ENCODE measurements at regions of chr6 and their contacts with region 1.

Region 1: DNA sequence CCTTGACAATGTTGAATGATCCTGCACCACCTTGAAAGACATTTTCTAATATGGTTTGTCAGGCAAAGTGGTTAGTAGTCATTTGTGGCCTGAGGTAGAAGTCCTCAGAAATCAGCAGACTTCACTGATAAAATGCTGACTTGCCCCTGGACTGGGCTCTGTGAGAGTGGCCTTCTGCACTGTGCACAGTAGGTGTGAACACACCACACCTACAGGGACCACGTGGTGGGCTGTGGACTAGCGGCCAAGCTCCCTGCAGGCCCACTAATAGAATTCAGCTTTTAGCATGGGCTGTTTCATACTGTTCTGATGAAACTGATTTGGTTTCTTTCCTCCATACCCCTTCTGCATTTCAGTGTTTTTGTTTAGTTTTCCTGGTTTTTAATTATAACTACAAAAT is 7.3 kb downstream of the BPHL start:
- DNase-seq: no peak
- H3K4me3 ChIP-seq: no peak overlapping the region
- H3K27ac ChIP-seq: no peak overlapping the region
- H3K4me1 ChIP-seq: no peaks in the 10 kb centered on the region
- H3K27me3 ChIP-seq: no peaks in the 10 kb centered on the region
- CTCF ChIP-seq: no peak
- POLR2A ChIP-seq: no peak

Region 2: GRCh38 chr6:3251462-3252314 is 125.9 kb after region 1 on chr6:
- intact Hi-C with region 1: loop called (anchors 5 kb)
- DNase-seq: peak; percentile 77 to 84
- H3K4me3 ChIP-seq: no peak overlapping the region
- H3K27ac ChIP-seq: no peak overlapping the region
- H3K4me1 ChIP-seq: peaks cover 0 to 7% of the 10 kb centered on the region in 2 donors
- H3K27me3 ChIP-seq: no peaks in the 10 kb centered on the region
- CTCF ChIP-seq: peak; percentile 90 to 98 (median 96)
- POLR2A ChIP-seq: no peak

Region 3: GRCh38 chr6:3294921-3295871 is 169.4 kb after region 1 on chr6:
- intact Hi-C with region 1: no loop called
- DNase-seq: peak in 1 of 2 donors; percentile 51
- H3K4me3 ChIP-seq: no peak overlapping the region
- H3K27ac ChIP-seq: no peak overlapping the region
- H3K4me1 ChIP-seq: no peaks in the 10 kb centered on the region
- H3K27me3 ChIP-seq: no peaks in the 10 kb centered on the region
- CTCF ChIP-seq: no peak
- POLR2A ChIP-seq: no peak

Measured in thyroid gland (tissue), 4 donors.